ENCODE measurements at regions of chr16 and their contacts with region 1.

Region 1: GRCh38 chr16:31179747-31180459 is at the start of gene FUS:
- DNase-seq: peak; percentile 98
- total RNA-seq, gene FUS: 158 TPM

Region 2: DNA sequence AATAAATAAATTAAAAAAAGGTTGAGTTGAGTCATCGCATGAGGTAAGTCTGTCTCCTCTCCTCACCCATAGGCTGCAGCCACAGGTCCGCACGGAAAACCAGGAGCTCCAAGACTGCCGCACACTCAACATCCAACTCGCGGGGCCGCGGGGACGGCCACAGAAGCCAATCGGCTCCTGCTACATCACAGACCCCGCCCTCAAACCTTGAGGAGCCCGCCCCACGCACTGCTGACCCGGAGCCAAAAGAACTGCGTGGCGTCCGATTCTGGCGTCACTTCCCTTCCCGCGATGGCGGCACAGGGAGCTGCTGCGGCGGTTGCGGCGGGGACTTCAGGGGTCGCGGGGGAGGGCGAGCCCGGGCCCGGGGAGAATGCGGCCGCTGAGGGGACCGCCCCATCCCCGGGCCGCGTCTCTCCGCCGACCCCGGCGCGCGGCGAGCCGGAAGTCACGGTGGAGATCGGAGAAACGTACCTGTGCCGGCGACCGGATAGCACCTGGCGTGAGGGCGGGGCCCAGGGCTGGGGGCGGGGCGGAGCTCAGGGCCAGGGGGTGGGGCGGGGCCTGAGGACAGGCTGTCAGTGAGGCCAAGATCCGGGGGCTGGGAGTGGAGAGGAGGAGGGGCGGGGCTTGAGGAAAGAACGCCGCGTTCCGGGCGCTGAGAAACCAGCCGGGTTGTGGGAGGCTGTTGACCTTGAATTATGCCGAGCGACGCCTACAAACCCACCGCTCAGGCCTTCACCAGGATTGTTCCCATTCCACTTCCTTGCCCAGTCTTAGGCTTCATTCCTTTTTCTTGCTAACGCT is 62.3 kb before region 1 on chr16 and contains the start of gene KAT8:
- intact Hi-C with region 1: loop called (anchors 10 kb)
- DNase-seq: peak; percentile 99
- total RNA-seq, gene KAT8: 56.5 TPM

Region 3: DNA sequence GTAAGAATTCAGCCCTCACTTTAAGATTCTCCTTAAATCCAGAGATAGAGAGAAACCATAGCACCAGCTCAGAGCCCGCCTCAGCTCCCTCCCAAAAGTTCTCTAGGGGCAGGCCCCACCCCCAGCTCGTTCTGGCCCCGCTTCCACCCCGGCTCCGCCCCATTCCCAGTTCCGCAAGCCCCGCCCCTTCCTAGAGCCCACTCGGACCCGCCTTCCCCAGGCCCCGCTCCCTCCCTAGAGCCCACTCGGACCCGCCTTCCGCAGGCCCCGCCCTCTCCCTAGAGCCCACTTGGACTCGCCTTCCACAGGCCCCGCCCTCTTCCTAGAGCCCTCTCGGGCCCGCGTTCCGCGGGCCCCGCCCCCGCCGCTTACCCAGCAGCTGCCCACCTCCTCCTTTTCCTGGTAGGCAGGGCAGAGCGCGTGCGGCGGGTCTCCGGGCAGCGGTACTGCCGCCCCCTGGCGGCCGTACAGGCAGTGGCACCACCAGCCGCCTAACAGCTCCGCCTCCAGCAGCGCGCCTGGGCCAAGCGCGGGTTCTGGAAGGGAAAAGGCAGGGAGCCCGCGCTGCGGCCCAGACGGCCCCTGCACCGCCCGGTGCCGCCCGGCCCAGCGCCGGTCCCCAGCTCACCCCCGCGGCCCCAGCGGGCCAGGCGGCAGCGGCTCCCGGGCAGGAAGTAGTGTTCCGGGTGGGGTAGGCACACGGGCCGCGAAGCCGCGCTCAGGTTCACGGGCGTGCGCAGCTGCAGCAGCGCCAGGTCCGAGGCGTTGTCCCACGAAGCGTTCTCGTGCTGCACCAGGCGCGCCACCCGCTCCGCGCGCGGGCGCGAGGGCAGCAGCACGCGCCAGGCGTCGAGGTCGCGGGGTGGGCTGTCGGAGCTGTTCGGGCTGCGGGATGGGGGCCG is 37.5 kb before region 1 on chr16:
- intact Hi-C with region 1: loop called (anchors 2 kb)
- DNase-seq: peak; percentile 99

Region 4: GRCh38 chr16:31301708-31302400 is 122.0 kb after region 1 on chr16:
- intact Hi-C with region 1: no loop called
- DNase-seq: no peak

Region 5: DNA sequence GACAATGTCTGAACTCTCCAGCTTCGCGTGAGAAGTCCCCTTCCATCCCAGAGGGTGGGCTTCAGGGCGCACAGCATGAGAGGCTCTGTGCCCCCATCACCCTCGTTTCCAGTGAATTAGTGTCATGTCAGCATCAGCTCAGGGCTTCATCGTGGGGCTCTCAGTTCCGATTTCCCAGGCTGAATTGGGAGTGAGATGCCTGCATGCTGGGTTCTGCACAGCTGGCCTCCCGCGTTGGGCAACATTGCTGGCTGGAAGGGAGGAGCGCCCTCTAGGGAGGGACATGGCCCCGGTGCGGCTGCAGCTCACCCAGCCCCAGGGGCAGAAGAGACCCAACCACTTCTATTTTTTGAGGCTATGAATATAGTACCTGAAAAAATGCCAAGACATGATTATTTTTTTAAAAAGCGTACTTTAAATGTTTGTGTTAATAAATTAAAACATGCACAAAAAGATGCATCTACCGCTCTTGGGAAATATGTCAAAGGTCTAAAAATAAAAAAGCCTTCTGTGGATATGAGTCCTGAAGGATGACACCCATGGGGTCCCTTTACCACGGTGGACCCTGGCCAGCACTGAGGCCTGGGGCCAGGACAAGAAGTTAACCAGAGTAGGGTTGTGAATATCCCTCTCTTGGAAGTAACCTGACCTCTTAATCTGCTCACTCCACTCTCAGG is 202.7 kb after region 1 on chr16:
- intact Hi-C with region 1: loop called (anchors 10 kb)
- DNase-seq: peak; percentile 91

Region 6: GRCh38 chr16:31440516-31441184 is 260.7 kb after region 1 on chr16:
- intact Hi-C with region 1: loop called (anchors 5 kb)
- DNase-seq: no peak

Measured in cardiac septum (tissue), 1 donor.